ENCODE measurements at regions of chr9 and their contacts with region 1.

Region 1: DNA sequence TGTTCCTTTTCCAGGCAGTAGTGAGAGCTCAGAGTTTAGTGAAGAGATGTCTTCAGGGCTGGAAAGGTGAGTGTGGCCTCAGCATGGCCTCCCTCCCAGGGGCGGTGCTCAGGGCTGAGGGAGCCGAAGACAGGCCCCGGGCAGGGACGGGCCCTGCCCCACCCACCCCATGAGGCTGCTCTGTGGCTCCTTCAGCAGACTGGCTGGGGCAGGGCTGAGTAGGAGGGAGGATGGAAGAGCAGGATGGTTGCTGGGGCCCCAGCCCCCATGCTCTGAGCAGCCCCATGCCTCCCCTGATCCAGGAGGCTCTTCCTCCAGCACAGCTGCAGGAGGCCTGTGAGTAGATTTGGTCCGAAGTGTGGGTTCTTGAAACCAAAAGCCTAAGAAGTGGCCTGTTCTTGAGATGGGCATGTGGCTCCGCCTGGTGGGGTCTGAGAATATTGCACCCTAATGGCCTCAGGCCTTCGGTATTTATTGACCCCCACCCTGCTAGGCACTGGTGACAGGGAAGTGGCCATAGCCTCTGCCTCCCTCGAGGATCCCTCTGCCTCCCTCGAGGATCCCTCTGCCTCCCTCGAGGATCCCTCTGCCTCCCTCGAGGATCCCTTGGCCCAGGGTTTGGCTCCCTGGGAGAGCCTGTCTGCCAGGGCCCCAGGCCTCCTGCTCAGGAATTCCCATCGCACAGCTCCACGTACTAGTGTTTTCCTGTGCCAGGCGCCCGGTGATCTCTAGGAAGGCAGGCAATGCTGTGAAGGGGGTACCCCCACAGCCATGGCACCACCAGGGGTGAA is 65.4 kb upstream of the GARNL3 start:
- DNase-seq: peak; percentile 77 to 83
- H3K4me3 ChIP-seq: no peak overlapping the region
- H3K27ac ChIP-seq: no peak overlapping the region
- H3K4me1 ChIP-seq: peaks cover 27% of the 10 kb centered on the region
- H3K27me3 ChIP-seq: no peaks in the 10 kb centered on the region
- CTCF ChIP-seq: peak; percentile 97

Region 2: DNA sequence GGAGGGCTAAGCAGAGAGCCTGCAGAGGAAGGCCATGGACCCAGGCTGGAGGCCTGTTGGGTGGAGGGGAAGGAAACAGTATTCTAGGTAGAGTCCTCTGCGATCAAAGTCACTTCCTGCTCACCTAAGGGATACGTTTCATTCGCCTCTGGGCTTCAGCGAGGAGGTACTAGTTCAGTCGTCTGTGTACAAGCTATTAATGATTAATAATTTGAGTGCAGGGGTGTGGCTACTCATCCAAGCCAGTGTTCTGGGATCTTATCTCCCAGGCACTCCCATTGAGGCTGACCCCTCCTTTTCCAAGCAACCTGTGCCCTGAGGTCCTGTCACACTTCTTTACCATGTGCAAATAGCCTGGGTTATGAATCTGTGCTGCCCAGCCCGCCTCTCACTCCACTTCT is 259.4 kb before region 1 on chr9:
- CTCF ChIA-PET with region 1: interaction called, 5 read pairs
- POLR2A ChIA-PET with region 1: no interaction called
- intact Hi-C with region 1: loop called (anchors 1 kb)
- DNase-seq: no peak
- H3K4me3 ChIP-seq: no peak overlapping the region
- H3K27ac ChIP-seq: no peak overlapping the region
- H3K4me1 ChIP-seq: no peaks in the 10 kb centered on the region
- H3K27me3 ChIP-seq: no peaks in the 10 kb centered on the region
- CTCF ChIP-seq: no peak

Region 3: DNA sequence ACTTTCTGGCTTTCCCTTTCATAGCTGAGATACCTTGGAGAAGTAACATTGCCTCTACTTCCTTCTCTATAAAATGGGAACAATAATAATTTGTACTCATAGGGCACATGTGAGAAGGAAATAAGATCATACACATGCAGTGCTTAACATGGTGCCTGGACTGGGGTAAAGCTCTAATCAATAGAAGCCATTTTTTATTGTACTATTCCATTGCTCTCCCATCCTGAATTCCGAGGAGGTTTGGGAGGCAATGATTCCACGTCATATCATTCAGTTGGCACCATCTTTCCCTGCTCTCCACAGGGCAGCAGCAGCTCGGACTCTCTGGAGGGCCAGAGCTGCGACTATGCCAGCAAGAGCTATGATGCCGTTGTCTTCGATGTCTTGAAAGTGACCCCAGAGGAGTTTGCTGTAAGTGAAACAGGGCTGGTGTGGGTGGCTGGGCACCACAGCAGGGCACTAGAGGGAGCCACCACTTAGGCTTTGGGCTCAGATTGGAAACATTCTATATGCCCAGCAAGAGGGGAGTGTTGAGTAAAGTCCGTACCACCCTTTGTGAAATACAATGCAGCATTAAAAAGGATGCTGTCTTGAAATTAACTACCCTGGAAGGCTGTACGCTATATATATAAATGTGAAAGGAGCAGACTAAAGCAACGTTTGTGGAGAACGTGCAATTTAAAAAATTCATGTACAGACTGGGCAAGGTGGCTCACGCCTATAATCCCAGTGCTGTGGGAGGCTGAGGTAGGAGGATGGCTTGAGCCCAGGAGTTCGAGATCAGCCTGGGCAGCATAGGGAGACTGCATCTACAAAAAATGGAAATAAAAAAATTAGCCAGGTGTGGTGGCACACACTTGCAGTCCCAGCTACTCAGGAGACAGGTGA is 233.4 kb before region 1 on chr9:
- CTCF ChIA-PET with region 1: interaction called, 4 read pairs
- POLR2A ChIA-PET with region 1: no interaction called
- intact Hi-C with region 1: loop called (anchors 1 kb)
- DNase-seq: peak in 1 of 2 experiments; percentile 28
- H3K4me3 ChIP-seq: no peak overlapping the region
- H3K27ac ChIP-seq: peak overlapping the region; percentile 63
- H3K4me1 ChIP-seq: peaks cover 19% of the 10 kb centered on the region
- H3K27me3 ChIP-seq: no peaks in the 10 kb centered on the region
- CTCF ChIP-seq: peak; percentile 77

Region 4: DNA sequence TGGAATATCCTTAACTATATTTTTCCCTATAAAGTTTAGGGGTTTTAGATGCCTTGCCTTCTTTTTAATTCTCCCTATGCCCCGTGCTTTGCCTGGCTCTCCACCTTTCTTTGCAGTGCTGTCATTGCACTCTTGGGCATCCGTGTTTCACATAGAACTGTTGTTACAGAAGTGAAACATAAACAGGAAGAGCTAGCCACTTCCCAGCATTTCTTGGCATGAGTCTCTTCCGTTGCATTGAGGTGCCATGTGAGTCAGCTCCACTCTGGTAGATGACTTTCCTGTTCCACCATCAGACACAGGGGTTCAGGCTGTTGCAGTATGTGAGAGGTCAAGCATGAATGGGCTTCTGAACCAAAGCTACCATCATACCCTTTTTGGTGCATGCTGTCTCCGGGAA is 150.2 kb before region 1 on chr9:
- CTCF ChIA-PET with region 1: no interaction called
- POLR2A ChIA-PET with region 1: no interaction called
- intact Hi-C with region 1: loop called (anchors 2 kb)
- DNase-seq: peak; percentile 70 to 95
- H3K4me3 ChIP-seq: peak overlapping the region; percentile 38; the same call in 1 of the 2 replicates
- H3K27ac ChIP-seq: peak overlapping the region; percentile 86
- H3K4me1 ChIP-seq: peaks cover 35% of the 10 kb centered on the region
- H3K27me3 ChIP-seq: no peaks in the 10 kb centered on the region
- CTCF ChIP-seq: 0 out of 2 replicates have a peak, but pooled peaks have one; percentile 34

Region 5: DNA sequence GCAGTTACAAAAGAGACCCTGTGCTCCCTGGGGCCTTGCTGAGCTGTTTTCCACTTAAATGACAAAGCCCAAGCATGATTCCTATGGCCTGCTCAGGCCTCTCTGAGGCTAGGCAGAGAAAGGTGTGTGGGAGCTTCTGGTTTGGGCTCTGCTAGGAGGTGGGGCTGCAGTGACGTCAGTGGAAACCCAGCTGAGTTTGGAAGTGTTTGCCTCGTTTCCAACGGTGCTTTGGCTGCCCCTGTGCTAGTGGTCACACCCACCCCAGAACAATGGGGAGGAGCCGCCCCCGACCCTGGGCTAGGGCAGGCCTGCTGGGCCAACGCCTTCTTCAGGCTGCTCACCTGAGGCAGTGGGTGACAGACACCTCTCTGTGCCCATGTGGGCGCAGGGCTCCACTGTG is 87.1 kb before region 1 on chr9:
- CTCF ChIA-PET with region 1: no interaction called
- POLR2A ChIA-PET with region 1: no interaction called
- intact Hi-C with region 1: loop called (anchors 5 kb)
- DNase-seq: peak; percentile 56 to 85
- H3K4me3 ChIP-seq: no peak overlapping the region
- H3K27ac ChIP-seq: no peak overlapping the region
- H3K4me1 ChIP-seq: peaks cover 46% of the 10 kb centered on the region
- H3K27me3 ChIP-seq: no peaks in the 10 kb centered on the region
- CTCF ChIP-seq: no peak

Measured in PC-9 (cell line).